ENCODE measurements at regions of chr1 and their contacts with region 1.

Region 1: GRCh38 chr1:183589874-183590243 is 400 bp downstream of the NCF2 start:
- DNase-seq: no peak
- ATAC-seq: no peak
- H3K4me3 ChIP-seq: no peak overlapping the region
- H3K27ac ChIP-seq: no peak overlapping the region
- H3K4me1 ChIP-seq: peaks cover 12% of the 10 kb centered on the region
- H3K27me3 ChIP-seq: no peaks in the 10 kb centered on the region
- CTCF ChIP-seq: no peak

Region 2: DNA sequence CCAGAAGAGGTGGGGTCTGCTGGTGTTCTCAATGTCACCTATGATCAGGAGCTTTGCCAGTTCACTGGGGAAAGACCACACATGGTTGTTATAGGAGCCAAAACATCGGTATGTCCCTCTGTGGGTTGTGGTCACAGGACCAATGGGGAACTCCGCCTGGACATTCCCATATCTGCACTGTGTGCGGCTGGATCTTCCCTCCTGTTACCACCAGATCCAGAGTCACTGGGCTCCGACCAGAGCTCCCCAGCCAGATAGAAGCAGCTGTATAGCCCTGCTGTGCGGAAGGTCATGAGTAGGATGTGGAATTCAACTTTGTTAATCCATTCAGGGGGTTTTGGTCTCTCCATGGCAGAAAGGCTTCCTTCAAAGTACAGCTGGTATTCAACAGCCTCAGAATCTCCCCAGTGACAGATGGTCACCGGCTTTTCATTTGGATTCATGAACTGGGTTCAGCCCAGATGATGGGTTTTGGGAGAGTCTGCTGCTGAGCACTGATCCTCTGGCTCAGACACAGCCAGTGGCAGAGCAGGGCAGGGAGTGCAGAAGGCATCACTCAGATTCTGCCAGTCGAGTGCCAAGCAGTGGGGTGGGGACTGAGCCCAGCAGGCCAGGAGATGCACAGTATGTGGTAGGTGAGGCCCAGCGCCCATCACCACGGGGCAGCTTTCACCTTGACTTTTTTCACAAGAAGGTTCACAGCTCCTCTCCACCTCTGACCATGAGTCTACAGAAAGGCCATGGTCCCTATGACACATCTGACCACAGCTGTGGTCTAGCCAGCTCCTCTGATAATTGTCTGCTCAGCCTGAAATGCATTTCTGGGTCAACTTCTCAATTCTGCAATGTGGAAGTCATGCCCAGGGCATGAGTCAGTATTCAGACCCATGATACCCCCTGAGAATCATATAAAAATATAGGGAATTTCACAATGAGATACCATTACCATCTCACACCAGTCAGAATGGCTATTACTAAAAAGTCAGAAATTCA is 634.0 kb before region 1 on chr1:
- CTCF ChIA-PET with region 1: no interaction called
- POLR2A ChIA-PET with region 1: no interaction called
- intact Hi-C with region 1: loop called (anchors 5 kb)
- DNase-seq: peak; percentile 72
- ATAC-seq: peak; percentile 70
- H3K4me3 ChIP-seq: no peak overlapping the region
- H3K27ac ChIP-seq: no peak overlapping the region
- H3K4me1 ChIP-seq: peaks cover 6% of the 10 kb centered on the region; the same call in 1 of the 2 replicates
- H3K27me3 ChIP-seq: no peaks in the 10 kb centered on the region
- CTCF ChIP-seq: no peak

Measured in PC-3 (cell line).